CD4-positive, alpha-beta T cell (primary cell): ENCODE measurements at regions of chr19 and their contacts with region 1.

Region 1: GRCh38 chr19:3423183-3423829 is 56.9 kb downstream of the NFIC start:
- DNase-seq: no peak
- ATAC-seq: no peak
- H3K4me3 ChIP-seq: no peak overlapping the region
- H3K4me3 Mint-ChIP-seq: no peak overlapping the region
- H3K27ac ChIP-seq: no peak overlapping the region
- H3K27ac Mint-ChIP-seq: no peak overlapping the region
- H3K4me1 ChIP-seq: no peaks in the 10 kb centered on the region
- H3K4me1 Mint-ChIP-seq: no peaks in the 10 kb centered on the region
- H3K27me3 ChIP-seq: no peaks in the 10 kb centered on the region
- H3K27me3 Mint-ChIP-seq: no peaks in the 10 kb centered on the region
- CTCF ChIP-seq: no peak

Region 2: GRCh38 chr19:3383121-3383722 is 40.1 kb before region 1 on chr19:
- CTCF ChIA-PET with region 1: no interaction called
- POLR2A ChIA-PET with region 1: no interaction called
- intact Hi-C with region 1: loop called in 1 of 2 experiments (anchors 5 kb)
- DNase-seq: no peak
- ATAC-seq: no peak
- H3K4me3 ChIP-seq: no peak overlapping the region
- H3K4me3 Mint-ChIP-seq: no peak overlapping the region
- H3K27ac ChIP-seq: no peak overlapping the region
- H3K27ac Mint-ChIP-seq: no peak overlapping the region
- H3K4me1 ChIP-seq: peaks cover 11% of the 10 kb centered on the region
- H3K4me1 Mint-ChIP-seq: peaks cover 14% of the 10 kb centered on the region
- H3K27me3 ChIP-seq: no peaks in the 10 kb centered on the region
- H3K27me3 Mint-ChIP-seq: no peaks in the 10 kb centered on the region
- CTCF ChIP-seq: no peak

Region 3: GRCh38 chr19:3494051-3494450 is 70.7 kb after region 1 on chr19:
- CTCF ChIA-PET with region 1: no interaction called
- POLR2A ChIA-PET with region 1: no interaction called
- intact Hi-C with region 1: no loop called
- DNase-seq: peak in 5 of 14 experiments; percentile 20 to 62 (median 31)
- ATAC-seq: peak; percentile 78
- H3K4me3 ChIP-seq: no peak overlapping the region
- H3K4me3 Mint-ChIP-seq: no peak overlapping the region
- H3K27ac ChIP-seq: no peak overlapping the region
- H3K27ac Mint-ChIP-seq: no peak overlapping the region
- H3K4me1 ChIP-seq: peaks cover 18% of the 10 kb centered on the region
- H3K4me1 Mint-ChIP-seq: peaks cover 17% of the 10 kb centered on the region
- H3K27me3 ChIP-seq: no peaks in the 10 kb centered on the region
- H3K27me3 Mint-ChIP-seq: no peaks in the 10 kb centered on the region
- CTCF ChIP-seq: no peak